Activated B cell treated with CpG ODN at 0.5 μM for 24 hours (primary cell): ENCODE measurements at regions of chr3 and their contacts with region 1.

Region 1: DNA sequence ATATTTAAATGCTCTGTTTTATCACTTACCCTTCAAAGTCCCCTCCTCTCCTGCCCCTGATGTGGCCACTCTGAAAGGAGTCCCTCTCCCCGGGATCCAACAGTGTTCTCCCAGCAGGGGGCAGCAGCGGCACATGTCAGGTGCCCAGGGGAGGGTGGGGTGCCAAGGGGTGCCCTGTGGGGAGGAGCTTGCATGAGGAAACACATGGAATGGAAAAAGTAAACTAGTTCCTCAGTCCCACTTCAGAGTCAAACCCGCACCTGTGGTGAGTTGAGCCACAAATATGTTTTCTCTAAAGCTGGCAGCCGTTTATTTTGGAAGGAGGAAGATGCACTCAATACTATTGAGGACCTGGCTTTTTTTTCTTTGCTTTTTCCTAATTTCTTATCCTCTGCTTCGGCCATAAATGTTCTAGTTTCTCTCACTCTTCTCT is 30.1 kb upstream of the NRROS start:
- DNase-seq: peak; percentile 89
- ATAC-seq: peak; percentile 96
- H3K4me3 Mint-ChIP-seq: peak overlapping the region; percentile 52
- H3K27ac Mint-ChIP-seq: peak overlapping the region; percentile 69
- H3K4me1 Mint-ChIP-seq: peaks cover 20% of the 10 kb centered on the region
- H3K27me3 Mint-ChIP-seq: no peaks in the 10 kb centered on the region
- CTCF ChIP-seq: peak; percentile 52

Region 2: DNA sequence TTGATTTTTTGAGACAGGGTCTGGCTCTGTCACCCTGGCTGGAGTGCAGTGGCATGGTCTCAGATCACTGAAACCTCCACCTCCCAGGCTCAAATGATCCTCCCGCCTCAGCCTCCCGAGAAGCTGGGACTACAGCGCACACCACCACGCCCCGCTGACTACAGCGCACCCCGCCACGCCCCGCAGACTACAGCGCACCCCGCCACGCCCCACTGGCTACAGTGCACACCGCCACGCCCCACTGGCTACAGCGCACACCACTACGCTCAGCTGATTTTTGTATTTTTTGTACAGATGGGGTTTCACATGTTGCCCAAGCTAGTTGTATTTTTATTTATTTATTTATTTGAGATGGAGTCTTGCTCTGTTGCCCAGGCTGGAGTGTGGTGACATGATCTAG is 357.4 kb before region 1 on chr3:
- CTCF ChIA-PET with region 1: no interaction called
- POLR2A ChIA-PET with region 1: no interaction called
- intact Hi-C with region 1: loop called (anchors 1 kb)
- DNase-seq: no peak
- ATAC-seq: peak; percentile 70
- H3K4me3 Mint-ChIP-seq: no peak overlapping the region
- H3K27ac Mint-ChIP-seq: no peak overlapping the region
- H3K4me1 Mint-ChIP-seq: peaks cover 8% of the 10 kb centered on the region
- H3K27me3 Mint-ChIP-seq: no peaks in the 10 kb centered on the region
- CTCF ChIP-seq: no peak

Region 3: DNA sequence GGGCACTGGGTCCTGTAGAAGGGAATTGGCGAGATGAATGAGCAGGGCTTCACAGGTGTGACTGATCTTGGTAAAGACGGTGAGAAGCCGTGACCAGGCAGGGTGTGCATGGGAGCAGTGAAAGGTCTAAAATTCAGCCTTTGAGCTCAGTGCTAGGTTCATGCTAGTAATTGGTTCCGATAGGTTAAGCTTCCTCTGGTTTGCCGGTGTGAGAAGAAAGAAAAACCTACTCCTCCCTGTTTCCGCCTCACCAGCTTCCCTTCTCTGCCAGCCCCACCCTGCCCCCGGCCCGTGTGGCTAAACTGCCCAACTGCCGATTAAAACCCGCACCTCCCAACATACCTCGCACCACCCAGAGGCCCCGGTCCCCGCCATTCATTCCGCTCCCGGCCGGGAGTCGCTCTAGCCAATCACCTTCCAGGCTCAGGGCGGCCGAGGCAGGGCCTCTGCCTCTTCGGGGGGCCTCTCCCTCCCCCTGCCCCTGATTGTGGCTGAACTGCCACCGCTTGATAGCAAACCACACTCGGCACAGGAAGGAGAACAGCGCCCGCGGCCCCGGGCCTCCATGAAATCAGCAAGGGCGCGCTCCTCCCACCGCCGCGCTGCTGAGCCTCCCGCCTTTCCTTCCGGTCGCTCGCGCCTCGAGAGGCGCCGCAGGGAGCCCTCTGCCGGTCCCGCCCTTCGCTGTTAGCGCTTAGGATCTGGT is 22.8 kb after region 1 on chr3:
- CTCF ChIA-PET with region 1: interaction called, 8 read pairs
- POLR2A ChIA-PET with region 1: interaction called, 52 read pairs
- intact Hi-C with region 1: loop called (anchors 1 kb)
- DNase-seq: peak; percentile 77
- ATAC-seq: peak; percentile 75
- H3K4me3 Mint-ChIP-seq: peak overlapping the region; percentile 93
- H3K27ac Mint-ChIP-seq: peak overlapping the region; percentile 96
- H3K4me1 Mint-ChIP-seq: peaks cover 66% of the 10 kb centered on the region
- H3K27me3 Mint-ChIP-seq: no peaks in the 10 kb centered on the region
- CTCF ChIP-seq: no peak

Region 4: GRCh38 chr3:196677353-196677752 is 68.0 kb after region 1 on chr3:
- CTCF ChIA-PET with region 1: interaction called, 10 read pairs
- POLR2A ChIA-PET with region 1: interaction called, 3 read pairs
- intact Hi-C with region 1: no loop called
- DNase-seq: no peak
- ATAC-seq: no peak
- H3K4me3 Mint-ChIP-seq: no peak overlapping the region
- H3K27ac Mint-ChIP-seq: no peak overlapping the region
- H3K4me1 Mint-ChIP-seq: peaks cover 13% of the 10 kb centered on the region
- H3K27me3 Mint-ChIP-seq: no peaks in the 10 kb centered on the region
- CTCF ChIP-seq: no peak

Region 5: GRCh38 chr3:196684548-196685407 is 75.4 kb after region 1 on chr3:
- CTCF ChIA-PET with region 1: interaction called, 258 read pairs
- POLR2A ChIA-PET with region 1: interaction called, 11 read pairs
- intact Hi-C with region 1: loop called (anchors 1 kb)
- DNase-seq: peak; percentile 49
- ATAC-seq: peak; percentile 90
- H3K4me3 Mint-ChIP-seq: peak overlapping the region; percentile 66
- H3K27ac Mint-ChIP-seq: peak overlapping the region; percentile 60
- H3K4me1 Mint-ChIP-seq: peaks cover 30% of the 10 kb centered on the region
- H3K27me3 Mint-ChIP-seq: no peaks in the 10 kb centered on the region
- CTCF ChIP-seq: peak; percentile 81

Region 6: DNA sequence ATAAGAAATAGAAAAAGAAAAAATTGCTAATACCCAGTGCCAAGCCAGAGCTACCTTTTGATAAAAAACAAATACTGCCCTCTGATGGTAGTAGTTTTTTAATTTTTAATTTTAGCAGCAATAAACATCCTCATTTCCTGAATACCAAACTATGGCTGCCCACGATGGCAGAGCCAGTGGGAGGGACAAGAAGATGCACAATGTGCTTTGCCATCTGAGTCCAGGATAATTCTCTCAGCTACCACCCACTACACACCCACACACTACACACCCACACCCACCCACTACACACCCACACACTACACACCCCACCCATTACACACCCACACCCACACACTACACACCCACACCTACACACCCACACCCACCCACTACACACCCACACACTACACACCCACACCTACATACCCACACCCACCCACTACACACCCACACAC is 84.9 kb after region 1 on chr3:
- CTCF ChIA-PET with region 1: interaction called, 258 read pairs
- POLR2A ChIA-PET with region 1: interaction called, 7 read pairs
- intact Hi-C with region 1: loop called (anchors 2 kb)
- DNase-seq: no peak
- ATAC-seq: peak; percentile 35
- H3K4me3 Mint-ChIP-seq: no peak overlapping the region
- H3K27ac Mint-ChIP-seq: no peak overlapping the region
- H3K4me1 Mint-ChIP-seq: peaks cover 17% of the 10 kb centered on the region
- H3K27me3 Mint-ChIP-seq: no peaks in the 10 kb centered on the region
- CTCF ChIP-seq: no peak

Region 7: DNA sequence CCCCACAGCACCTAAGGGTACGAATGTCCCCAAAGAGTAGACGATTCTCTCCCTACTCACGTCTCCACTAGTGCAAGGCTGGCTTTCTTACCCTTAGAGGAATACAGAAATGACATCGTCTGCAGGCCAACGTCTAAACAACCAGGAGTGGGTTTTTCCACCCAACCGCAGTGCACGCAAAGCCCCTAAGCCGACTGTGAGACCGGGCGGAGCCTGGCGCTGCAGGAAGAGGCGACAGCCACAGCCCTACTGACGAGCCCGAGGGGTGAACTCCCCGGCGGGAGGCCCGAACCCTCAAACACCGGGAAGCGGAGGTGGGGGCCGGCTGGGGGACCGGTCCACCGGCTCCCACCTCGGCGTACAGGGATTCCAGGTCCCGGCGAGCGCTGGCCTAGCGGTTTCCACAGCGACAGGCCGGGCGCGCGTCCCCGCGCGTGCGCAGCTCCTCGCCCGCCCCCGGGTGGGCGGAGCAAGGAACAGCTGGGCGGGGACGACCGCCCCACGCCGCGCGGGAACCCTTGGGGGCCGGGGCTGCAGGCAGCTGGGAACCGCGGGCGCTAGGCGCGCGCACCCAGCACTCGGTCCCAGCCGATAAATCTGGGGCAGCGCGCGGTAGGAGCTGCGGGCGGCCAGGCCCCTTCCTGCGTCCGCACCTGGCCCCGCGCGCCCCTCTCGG is 102.6 kb after region 1 on chr3 and contains the starts of genes CEP19 and PIGX:
- CTCF ChIA-PET with region 1: interaction called, 5 read pairs
- POLR2A ChIA-PET with region 1: interaction called, 11 read pairs
- intact Hi-C with region 1: no loop called
- DNase-seq: peak; percentile 96
- ATAC-seq: peak; percentile 80
- H3K4me3 Mint-ChIP-seq: peak within 1 kb of the TSS; percentile 91
- H3K27ac Mint-ChIP-seq: peak within 1 kb of the TSS; percentile 98
- H3K4me1 Mint-ChIP-seq: peaks cover 20% of the 10 kb centered on the region
- H3K27me3 Mint-ChIP-seq: no peaks in the 10 kb centered on the region
- CTCF ChIP-seq: no peak
- total RNA-seq, gene CEP19: 4.0 and 4.1 TPM in 2 replicates
- total RNA-seq, gene PIGX: 18.0 and 21.8 TPM in 2 replicates